ENCODE measurements at regions of chr6 and their contacts with region 1.

Region 1: DNA sequence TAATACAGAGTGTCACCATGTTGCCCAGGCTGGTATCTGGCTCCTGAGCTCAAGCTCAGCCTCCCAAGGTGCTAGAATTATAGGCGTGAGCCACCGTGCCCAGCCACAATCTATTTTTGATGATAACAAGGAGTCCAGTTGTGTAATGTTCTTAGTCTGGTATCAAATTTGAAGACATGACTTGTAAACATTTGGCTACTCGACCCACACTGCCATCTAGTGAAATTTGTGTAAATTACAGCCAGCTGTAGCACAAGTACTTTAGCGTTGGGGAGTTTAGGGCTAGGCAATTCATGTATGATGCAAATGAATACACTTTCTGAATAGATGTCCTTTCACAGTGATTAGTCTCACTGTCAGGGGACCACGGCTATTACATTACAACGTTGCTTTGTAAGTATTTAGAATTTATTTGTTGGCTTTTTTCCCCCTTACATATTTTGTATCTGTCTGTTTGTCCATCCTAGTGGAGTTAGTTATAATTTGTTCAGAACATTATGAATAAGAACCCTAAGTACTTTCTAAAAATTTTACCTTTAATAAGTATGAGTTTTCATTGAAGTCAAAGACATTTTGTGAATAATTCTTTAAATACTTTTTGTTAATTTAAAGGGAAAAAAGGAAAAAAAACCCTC is 139.7 kb downstream of the PRDM13 start:
- DNase-seq: peak; percentile 24
- ATAC-seq: peak; percentile 70 to 76

Region 2: DNA sequence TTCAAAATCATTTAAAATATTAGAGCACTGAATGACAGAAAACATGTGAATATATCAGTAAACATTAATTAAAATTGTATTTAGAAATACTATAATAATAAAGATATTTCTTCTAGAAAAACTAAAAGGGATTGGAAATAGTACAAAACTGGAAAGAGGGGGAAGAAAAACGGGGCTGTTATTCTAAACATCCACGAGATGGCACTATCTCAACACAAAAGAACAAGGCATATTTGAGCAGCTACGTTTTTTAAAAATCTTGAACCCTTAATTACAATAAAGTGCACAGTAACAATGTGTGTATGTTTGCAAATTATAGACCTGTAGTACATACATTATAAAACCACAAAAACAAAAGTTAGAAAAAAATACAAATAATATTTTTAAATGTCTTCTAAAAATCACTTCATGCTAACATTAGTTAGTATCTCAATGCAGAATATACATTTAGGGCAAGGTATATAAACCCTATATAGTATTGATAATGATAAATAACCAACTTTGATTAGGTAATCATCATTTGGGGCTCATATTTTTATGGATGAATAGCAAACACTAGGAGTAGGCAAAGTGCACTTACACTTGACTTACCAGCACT is 278.8 kb before region 1 on chr6:
- intact Hi-C with region 1: loop called in 1 of 2 experiments (anchors 2 kb)
- DNase-seq: no peak
- ATAC-seq: no peak

Region 3: DNA sequence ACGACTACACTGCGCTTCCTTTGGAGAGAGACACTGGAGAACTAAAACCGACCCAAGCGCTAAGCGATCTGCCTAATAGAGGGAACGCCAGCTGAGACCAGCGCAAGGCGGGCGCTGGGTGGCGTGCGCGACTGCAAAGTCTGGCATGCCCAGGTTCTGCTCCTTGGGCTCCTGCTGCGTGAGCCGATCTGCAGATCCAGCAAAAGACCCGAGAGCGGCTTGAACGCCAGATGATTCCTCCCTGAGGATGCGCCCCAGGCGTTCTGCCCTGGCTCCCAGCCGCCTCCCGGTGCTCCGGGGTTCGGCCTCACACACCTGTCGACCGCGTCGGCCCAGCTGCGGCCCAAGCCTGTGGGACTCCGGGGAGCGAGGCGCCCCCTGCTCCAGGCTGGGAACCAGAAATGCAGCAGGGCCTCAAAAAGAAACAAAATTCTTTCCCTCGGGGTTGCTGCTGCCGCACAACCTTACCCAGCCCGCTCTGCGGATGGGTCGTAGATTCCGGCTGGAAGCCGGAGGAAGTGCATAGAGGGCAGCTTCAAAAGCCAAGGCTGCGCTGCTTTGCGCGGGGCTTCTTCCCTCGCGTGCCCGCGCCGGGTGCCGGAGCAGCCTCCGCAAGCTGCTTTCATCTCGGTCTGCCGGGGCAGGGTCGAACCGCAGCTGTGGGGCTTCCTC is 157.6 kb before region 1 on chr6:
- intact Hi-C with region 1: loop called (anchors 5 to 10 kb)
- DNase-seq: peak; percentile 69
- ATAC-seq: peak; percentile 92 to 95

Region 4: GRCh38 chr6:99660206-99660605 is 86.2 kb before region 1 on chr6:
- intact Hi-C with region 1: no loop called
- DNase-seq: no peak
- ATAC-seq: no peak